ENCODE measurements at regions of chr15 and their contacts with region 1.

Region 1: GRCh38 chr15:78389322-78389721 is 48.7 kb upstream of the IREB2 start:
- DNase-seq: no peak
- ATAC-seq: no peak
- H3K4me3 ChIP-seq: no peak overlapping the region
- H3K27ac ChIP-seq: no peak overlapping the region
- H3K4me1 ChIP-seq: no peaks in the 10 kb centered on the region
- H3K27me3 ChIP-seq: peaks cover 0 to 72% (median 30%) of the 10 kb centered on the region in 7 donors
- CTCF ChIP-seq: no peak

Region 2: GRCh38 chr15:79283252-79284048 is 894.1 kb after region 1 on chr15:
- intact Hi-C with region 1: loop called in 1 of 10 experiments (anchors 5 kb)
- DNase-seq: peak; percentile 23 to 49
- ATAC-seq: peak; percentile 74 to 90 (median 86)
- H3K4me3 ChIP-seq: no peak overlapping the region
- H3K27ac ChIP-seq: no peak overlapping the region
- H3K4me1 ChIP-seq: peaks cover 0 to 10% (median 0%) of the 10 kb centered on the region in 9 donors
- H3K27me3 ChIP-seq: peaks cover 12 to 67% (median 48%) of the 10 kb centered on the region in 7 donors
- CTCF ChIP-seq: peak in 2 of 9 donors; percentile 8 to 15